ENCODE measurements at regions of chr6 and their contacts with region 1.

Region 1: GRCh38 chr6:134063966-134064445 is 11.6 kb upstream of the SLC2A12 start:
- DNase-seq: peak; percentile 65
- ATAC-seq: peak; percentile 94
- H3K4me3 Mint-ChIP-seq: no peak overlapping the region
- H3K27ac Mint-ChIP-seq: no peak overlapping the region
- H3K4me1 Mint-ChIP-seq: no peaks in the 10 kb centered on the region
- H3K27me3 Mint-ChIP-seq: no peaks in the 10 kb centered on the region
- CTCF ChIP-seq: peak; percentile 84

Region 2: DNA sequence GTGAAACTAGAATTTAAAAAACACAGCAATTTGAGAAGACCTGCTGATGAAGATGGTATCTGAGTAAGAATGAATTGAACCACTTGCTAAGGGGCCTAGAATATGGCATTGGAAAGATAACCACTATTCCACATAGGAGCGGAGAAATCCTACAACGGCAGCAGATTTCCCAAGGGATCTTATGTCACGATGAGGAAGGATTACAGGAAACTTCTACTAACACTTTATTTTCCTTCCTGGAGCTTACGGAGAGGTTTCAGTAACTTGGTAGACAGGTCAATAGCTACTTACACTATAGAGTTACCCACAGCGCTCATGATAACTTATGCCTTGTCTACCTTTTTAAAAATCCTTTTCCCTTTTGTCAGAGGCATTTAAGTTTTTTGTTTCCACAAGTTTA is 186.9 kb before region 1 on chr6:
- CTCF ChIA-PET with region 1: no interaction called
- POLR2A ChIA-PET with region 1: no interaction called
- intact Hi-C with region 1: no loop called
- DNase-seq: no peak
- ATAC-seq: no peak
- H3K4me3 Mint-ChIP-seq: no peak overlapping the region
- H3K27ac Mint-ChIP-seq: no peak overlapping the region
- H3K4me1 Mint-ChIP-seq: no peaks in the 10 kb centered on the region
- H3K27me3 Mint-ChIP-seq: peaks cover 16% of the 10 kb centered on the region
- CTCF ChIP-seq: no peak

Region 3: DNA sequence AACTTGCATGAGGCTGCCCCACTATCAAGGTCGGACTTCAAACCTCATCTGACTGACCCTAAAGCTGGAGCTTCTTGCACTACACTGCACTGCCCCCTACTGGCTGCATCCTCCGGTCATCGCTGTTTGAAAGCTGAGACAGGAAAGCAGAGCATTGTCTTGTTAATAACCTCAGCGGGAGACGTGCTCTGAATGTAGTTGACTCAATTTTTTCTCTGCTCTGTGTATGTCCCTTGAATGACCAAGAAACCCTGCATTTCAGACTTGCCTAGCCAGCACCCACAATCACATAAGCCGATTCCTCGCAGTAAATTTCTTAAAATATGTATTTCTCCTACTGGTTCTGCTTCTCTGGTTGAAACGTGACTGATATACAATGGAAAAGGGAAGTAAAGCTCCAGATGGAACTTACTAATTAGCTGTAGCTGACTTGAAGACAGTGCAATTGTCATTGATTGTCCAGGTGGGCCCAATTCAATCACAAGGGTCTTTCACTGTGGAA is 147.3 kb before region 1 on chr6:
- CTCF ChIA-PET with region 1: interaction called, 193 read pairs
- POLR2A ChIA-PET with region 1: no interaction called
- intact Hi-C with region 1: no loop called
- DNase-seq: peak; percentile 93
- ATAC-seq: peak; percentile 76
- H3K4me3 Mint-ChIP-seq: no peak overlapping the region
- H3K27ac Mint-ChIP-seq: no peak overlapping the region
- H3K4me1 Mint-ChIP-seq: peaks cover 4% of the 10 kb centered on the region
- H3K27me3 Mint-ChIP-seq: peaks cover 22% of the 10 kb centered on the region
- CTCF ChIP-seq: peak; percentile 92

Region 4: DNA sequence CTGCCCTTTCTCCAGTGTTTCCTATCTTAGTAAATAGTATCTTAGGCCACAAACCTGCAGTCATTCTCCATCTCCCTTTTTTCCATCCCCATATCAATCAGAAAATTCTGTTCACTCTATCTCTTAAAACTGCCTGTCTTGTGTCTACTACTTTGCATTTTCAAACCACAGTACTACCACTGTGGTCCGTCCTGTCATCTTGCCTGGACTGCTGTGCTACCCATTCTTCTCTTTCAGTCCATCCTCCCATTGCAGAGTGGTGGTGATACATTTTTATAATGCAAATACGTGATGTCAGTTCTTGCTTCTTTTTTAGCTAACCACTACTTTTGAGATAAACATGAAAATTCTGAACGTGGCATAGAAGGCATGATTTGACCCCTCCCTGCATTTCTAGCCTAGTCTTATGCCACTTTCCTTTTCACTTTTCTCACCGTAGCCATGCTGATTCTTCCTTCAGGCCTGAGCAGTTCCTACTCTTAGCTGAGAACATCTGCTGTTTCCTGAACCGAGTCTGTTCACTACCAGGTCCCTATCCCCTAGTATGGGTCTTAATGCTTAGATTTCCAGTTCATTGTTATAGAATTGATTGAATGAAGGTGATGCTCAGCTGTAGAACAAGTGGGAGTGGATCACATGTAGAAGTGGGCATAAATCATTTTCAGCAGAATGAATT is 97.2 kb before region 1 on chr6:
- CTCF ChIA-PET with region 1: interaction called, 15 read pairs
- POLR2A ChIA-PET with region 1: no interaction called
- intact Hi-C with region 1: no loop called
- DNase-seq: no peak
- ATAC-seq: no peak
- H3K4me3 Mint-ChIP-seq: no peak overlapping the region
- H3K27ac Mint-ChIP-seq: no peak overlapping the region
- H3K4me1 Mint-ChIP-seq: peaks cover 57% of the 10 kb centered on the region
- H3K27me3 Mint-ChIP-seq: no peaks in the 10 kb centered on the region
- CTCF ChIP-seq: no peak

Region 5: GRCh38 chr6:134002821-134003220 is 61.2 kb before region 1 on chr6:
- CTCF ChIA-PET with region 1: interaction called, 14 read pairs
- POLR2A ChIA-PET with region 1: no interaction called
- intact Hi-C with region 1: no loop called
- DNase-seq: no peak
- ATAC-seq: no peak
- H3K4me3 Mint-ChIP-seq: no peak overlapping the region
- H3K27ac Mint-ChIP-seq: no peak overlapping the region
- H3K4me1 Mint-ChIP-seq: no peaks in the 10 kb centered on the region
- H3K27me3 Mint-ChIP-seq: peaks cover 10% of the 10 kb centered on the region
- CTCF ChIP-seq: no peak

Region 6: DNA sequence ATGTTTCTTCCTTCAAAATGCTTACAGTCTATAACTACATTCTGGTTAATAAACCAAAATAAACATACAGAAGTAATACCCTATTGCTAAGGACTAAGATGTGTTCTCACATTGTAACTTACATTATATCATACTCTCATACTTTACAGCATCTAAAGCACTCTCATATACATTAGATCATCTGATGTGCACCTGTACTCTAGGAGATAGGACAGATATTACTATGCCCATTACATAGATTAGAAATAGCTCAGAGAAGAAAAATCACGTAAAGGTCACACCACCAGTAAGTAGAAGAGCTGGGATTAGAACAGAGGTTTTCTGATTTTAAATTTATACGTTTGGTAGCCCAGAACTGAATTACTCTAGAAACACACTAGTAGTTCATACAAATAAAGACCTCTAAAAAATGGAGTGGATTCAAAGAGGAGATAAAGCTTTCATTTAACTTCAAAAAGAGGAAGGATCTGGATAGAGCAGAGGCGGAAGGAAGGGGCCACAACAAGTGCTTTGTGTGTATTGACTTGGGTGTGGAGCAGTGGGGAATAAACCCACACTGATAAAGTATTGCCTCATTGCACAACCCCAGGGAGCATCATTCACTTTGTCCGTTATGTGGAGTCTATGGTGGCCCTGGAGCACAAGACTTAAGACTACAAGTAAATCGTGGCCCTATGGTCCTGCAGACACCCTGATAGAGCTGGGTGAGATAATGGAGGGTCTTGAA is 42.4 kb before region 1 on chr6:
- CTCF ChIA-PET with region 1: interaction called, 24 read pairs
- POLR2A ChIA-PET with region 1: no interaction called
- intact Hi-C with region 1: no loop called
- DNase-seq: no peak
- ATAC-seq: no peak
- H3K4me3 Mint-ChIP-seq: no peak overlapping the region
- H3K27ac Mint-ChIP-seq: no peak overlapping the region
- H3K4me1 Mint-ChIP-seq: peaks cover 2% of the 10 kb centered on the region
- H3K27me3 Mint-ChIP-seq: no peaks in the 10 kb centered on the region
- CTCF ChIP-seq: no peak

Region 7: GRCh38 chr6:134047673-134048072 is 16.3 kb before region 1 on chr6:
- CTCF ChIA-PET with region 1: interaction called, 32 read pairs
- POLR2A ChIA-PET with region 1: no interaction called
- intact Hi-C with region 1: no loop called
- DNase-seq: no peak
- ATAC-seq: no peak
- H3K4me3 Mint-ChIP-seq: no peak overlapping the region
- H3K27ac Mint-ChIP-seq: no peak overlapping the region
- H3K4me1 Mint-ChIP-seq: peaks cover 6% of the 10 kb centered on the region
- H3K27me3 Mint-ChIP-seq: peaks cover 5% of the 10 kb centered on the region
- CTCF ChIP-seq: no peak

Region 8: GRCh38 chr6:134080171-134080795 is 16.3 kb after region 1 on chr6:
- CTCF ChIA-PET with region 1: interaction called, 29 read pairs
- POLR2A ChIA-PET with region 1: no interaction called
- intact Hi-C with region 1: no loop called
- DNase-seq: peak; percentile 3
- ATAC-seq: no peak
- H3K4me3 Mint-ChIP-seq: no peak overlapping the region
- H3K27ac Mint-ChIP-seq: no peak overlapping the region
- H3K4me1 Mint-ChIP-seq: peaks cover 13% of the 10 kb centered on the region
- H3K27me3 Mint-ChIP-seq: no peaks in the 10 kb centered on the region
- CTCF ChIP-seq: no peak